Tibial artery (tissue), 4 donors: ENCODE measurements at regions of chr6 and their contacts with region 1.

Region 1: DNA sequence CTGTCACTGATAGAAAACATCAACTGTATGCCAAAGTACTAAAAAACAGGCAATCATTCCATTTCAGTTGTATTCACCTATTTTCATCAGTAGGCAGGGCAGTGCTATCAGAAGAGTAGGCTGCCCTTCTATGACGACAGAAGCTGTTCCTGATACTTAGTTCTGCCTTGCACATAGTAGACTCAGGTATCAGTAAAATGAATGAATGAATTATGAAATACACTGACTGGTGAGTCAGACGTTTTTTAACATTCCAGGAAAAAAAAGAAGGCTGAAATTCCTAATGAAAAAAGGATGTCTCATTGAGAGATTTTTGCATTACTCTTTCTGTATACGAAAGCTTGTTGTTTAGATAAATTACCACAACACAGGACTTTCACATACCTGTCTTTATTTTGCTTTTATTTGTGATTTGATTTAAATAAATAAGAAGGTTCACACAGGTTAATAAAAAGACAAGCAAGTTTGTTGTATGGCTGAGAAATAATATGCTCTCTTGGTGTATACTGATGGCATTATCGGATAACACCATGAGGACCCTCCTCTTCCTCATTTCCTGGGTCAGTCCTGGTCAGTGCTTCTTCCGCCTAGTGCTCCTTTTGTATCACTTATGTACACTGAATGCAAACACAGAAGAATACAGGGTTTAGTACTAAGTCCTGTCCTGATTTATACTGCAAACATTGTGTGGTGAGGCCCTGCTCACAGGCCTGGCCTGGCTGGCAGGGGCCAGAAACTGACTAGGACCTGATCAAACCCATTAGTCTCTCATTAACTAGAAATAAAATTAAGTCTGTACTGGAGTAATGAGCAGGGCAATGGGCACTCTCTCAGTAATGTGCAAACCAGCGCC is 39.4 kb upstream of the SPDEF start:
- DNase-seq: no peak
- H3K4me3 ChIP-seq: no peak overlapping the region
- H3K27ac ChIP-seq: no peak overlapping the region
- H3K4me1 ChIP-seq: peaks cover 4 to 59% (median 39%) of the 10 kb centered on the region in 4 donors
- H3K27me3 ChIP-seq: no peaks in the 10 kb centered on the region
- CTCF ChIP-seq: no peak

Region 2: GRCh38 chr6:33875141-33875581 is 720.4 kb before region 1 on chr6:
- intact Hi-C with region 1: no loop called
- DNase-seq: no peak
- H3K4me3 ChIP-seq: no peak overlapping the region
- H3K27ac ChIP-seq: no peak overlapping the region
- H3K4me1 ChIP-seq: no peaks in the 10 kb centered on the region
- H3K27me3 ChIP-seq: peaks cover 0 to 66% of the 10 kb centered on the region in 2 donors
- CTCF ChIP-seq: no peak

Region 3: GRCh38 chr6:34436803-34437643 is 158.5 kb before region 1 on chr6:
- intact Hi-C with region 1: loop called (anchors 10 kb)
- DNase-seq: no peak
- H3K4me3 ChIP-seq: no peak overlapping the region
- H3K27ac ChIP-seq: no peak overlapping the region
- H3K4me1 ChIP-seq: no peaks in the 10 kb centered on the region
- H3K27me3 ChIP-seq: peaks cover 0 to 4% of the 10 kb centered on the region in 2 donors
- CTCF ChIP-seq: no peak

Region 4: DNA sequence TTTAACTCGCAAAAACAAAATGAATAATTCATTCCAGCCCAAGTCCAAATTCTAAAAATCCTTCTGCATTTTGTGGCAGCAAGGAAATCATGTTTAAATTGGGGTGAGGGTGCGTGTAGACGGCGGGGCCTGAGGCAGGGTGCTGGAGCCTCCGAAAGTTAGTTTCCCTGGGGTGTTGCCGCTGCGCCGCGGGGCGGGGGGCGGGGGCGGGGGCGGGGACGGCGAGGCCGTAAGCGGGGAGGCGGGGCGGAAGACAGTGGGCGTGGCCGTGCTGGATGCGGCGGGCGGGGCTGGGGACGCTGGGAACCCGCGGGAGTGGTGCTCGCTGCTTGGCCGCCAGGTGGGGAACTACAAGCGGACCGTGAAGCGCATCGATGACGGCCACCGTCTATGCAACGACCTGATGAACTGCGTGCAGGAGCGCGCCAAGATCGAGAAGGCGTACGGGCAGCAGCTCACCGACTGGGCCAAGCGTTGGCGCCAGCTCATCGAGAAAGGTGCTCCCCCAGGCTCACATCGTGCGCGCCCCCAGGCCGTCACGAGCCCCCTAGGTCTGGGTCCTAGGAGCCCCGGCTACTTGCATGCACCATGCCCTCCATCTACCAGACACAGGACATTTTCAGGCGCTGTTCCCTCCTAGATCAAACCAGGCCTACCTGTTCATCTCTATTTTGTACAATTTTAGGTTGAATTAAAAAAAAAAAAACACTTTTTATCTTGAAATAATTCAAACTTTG is 68.4 kb before region 1 on chr6:
- intact Hi-C with region 1: no loop called
- DNase-seq: peak; percentile 93 to 96
- H3K4me3 ChIP-seq: peak overlapping the region; percentile 32 to 43
- H3K27ac ChIP-seq: peak overlapping the region; percentile 58 to 69
- H3K4me1 ChIP-seq: peaks cover 0 to 13% (median 8%) of the 10 kb centered on the region in 4 donors
- H3K27me3 ChIP-seq: no peaks in the 10 kb centered on the region
- CTCF ChIP-seq: peak; percentile 78 to 81

Region 5: GRCh38 chr6:34656378-34657036 is 60.9 kb after region 1 on chr6:
- intact Hi-C with region 1: no loop called
- DNase-seq: no peak
- H3K4me3 ChIP-seq: peak overlapping the region; percentile 40 to 48
- H3K27ac ChIP-seq: peak overlapping the region; percentile 71 to 85
- H3K4me1 ChIP-seq: peaks cover 0 to 42% (median 23%) of the 10 kb centered on the region in 4 donors
- H3K27me3 ChIP-seq: no peaks in the 10 kb centered on the region
- CTCF ChIP-seq: no peak